CD4-positive, alpha-beta T cell (primary cell): ENCODE measurements at regions of chr16 and their contacts with region 1.

Region 1: GRCh38 chr16:50719518-50720337 is 22.2 kb upstream of the CYLD start:
- DNase-seq: peak in 7 of 14 experiments; percentile 16 to 53 (median 38)
- ATAC-seq: peak; percentile 77
- H3K4me3 ChIP-seq: no peak overlapping the region
- H3K4me3 Mint-ChIP-seq: no peak overlapping the region
- H3K27ac ChIP-seq: no peak overlapping the region
- H3K27ac Mint-ChIP-seq: peak overlapping the region; percentile 32
- H3K4me1 ChIP-seq: peaks cover 33% of the 10 kb centered on the region
- H3K4me1 Mint-ChIP-seq: peaks cover 38% of the 10 kb centered on the region
- H3K27me3 ChIP-seq: no peaks in the 10 kb centered on the region
- H3K27me3 Mint-ChIP-seq: no peaks in the 10 kb centered on the region
- CTCF ChIP-seq: peak; percentile 19

Region 2: DNA sequence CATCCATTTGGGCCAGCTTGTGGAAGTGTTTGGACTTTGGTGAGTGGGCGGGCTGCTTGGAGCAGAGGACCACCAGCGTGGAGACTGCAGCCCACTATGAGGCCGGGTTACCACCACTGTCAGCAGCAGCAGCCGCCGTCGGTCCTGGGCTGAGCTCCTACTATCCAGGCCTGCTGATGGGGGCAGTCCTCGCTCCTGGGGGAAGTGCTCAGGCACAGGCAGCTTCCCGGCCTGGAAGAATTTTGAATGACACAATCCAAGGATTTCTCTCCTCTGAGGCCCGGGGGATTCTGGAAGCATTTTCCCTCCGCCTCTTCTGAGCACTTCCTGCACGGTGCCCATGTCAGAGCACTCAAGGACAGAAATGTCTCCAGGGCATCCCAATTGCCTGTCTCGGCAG is 31.6 kb before region 1 on chr16:
- CTCF ChIA-PET with region 1: no interaction called
- POLR2A ChIA-PET with region 1: interaction called, 5 read pairs
- intact Hi-C with region 1: loop called in 1 of 2 experiments (anchors 1 kb)
- DNase-seq: peak in 1 of 14 experiments; percentile 12
- ATAC-seq: no peak
- H3K4me3 ChIP-seq: no peak overlapping the region
- H3K4me3 Mint-ChIP-seq: no peak overlapping the region
- H3K27ac ChIP-seq: no peak overlapping the region
- H3K27ac Mint-ChIP-seq: no peak overlapping the region
- H3K4me1 ChIP-seq: peaks cover 53% of the 10 kb centered on the region
- H3K4me1 Mint-ChIP-seq: peaks cover 52% of the 10 kb centered on the region
- H3K27me3 ChIP-seq: no peaks in the 10 kb centered on the region
- H3K27me3 Mint-ChIP-seq: no peaks in the 10 kb centered on the region
- CTCF ChIP-seq: no peak

Region 3: GRCh38 chr16:50761267-50761666 is 41.5 kb after region 1 on chr16:
- CTCF ChIA-PET with region 1: no interaction called
- POLR2A ChIA-PET with region 1: no interaction called
- intact Hi-C with region 1: loop called in 1 of 2 experiments (anchors 1 kb)
- DNase-seq: no peak
- ATAC-seq: no peak
- H3K4me3 ChIP-seq: no peak overlapping the region
- H3K4me3 Mint-ChIP-seq: peak overlapping the region; percentile 1
- H3K27ac ChIP-seq: no peak overlapping the region
- H3K27ac Mint-ChIP-seq: peak overlapping the region; percentile 10
- H3K4me1 ChIP-seq: peaks cover 30% of the 10 kb centered on the region
- H3K4me1 Mint-ChIP-seq: peaks cover 95% of the 10 kb centered on the region
- H3K27me3 ChIP-seq: no peaks in the 10 kb centered on the region
- H3K27me3 Mint-ChIP-seq: no peaks in the 10 kb centered on the region
- CTCF ChIP-seq: no peak